Breast epithelium (tissue), 4 donors: ENCODE measurements at regions of chr6 and their contacts with region 1.

Region 1: DNA sequence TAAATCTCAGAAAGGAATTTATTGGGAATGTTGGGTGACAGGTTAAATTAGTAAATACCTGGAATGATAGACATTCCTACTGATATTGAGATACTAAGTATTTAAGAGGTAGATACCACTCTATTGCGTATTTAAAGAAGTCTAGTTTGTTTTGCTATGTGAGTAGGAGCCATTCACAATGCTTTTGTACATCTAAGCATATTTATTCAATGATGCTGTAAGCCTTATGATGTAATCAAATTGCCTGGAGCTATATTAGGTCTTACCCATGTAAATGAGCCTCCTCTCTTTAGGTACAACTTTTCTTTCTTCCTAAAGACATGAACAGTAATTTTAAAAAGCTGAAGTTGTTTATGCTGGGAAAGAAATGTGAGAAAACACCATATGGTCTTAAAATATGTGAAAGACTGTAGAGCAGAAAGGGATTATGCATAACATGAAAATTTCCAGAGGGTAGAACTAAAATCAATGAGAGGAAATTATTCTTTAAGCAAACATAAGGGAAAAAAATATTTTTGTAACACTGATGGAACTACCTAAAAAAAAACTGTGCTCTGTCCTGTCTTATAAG is 526.7 kb downstream of the EPHA7 start:
- DNase-seq: no peak
- H3K4me3 ChIP-seq: no peak overlapping the region
- H3K27ac ChIP-seq: no peak overlapping the region
- H3K4me1 ChIP-seq: no peaks in the 10 kb centered on the region
- H3K27me3 ChIP-seq: no peaks in the 10 kb centered on the region
- CTCF ChIP-seq: no peak
- POLR2A ChIP-seq: no peak

Region 2: DNA sequence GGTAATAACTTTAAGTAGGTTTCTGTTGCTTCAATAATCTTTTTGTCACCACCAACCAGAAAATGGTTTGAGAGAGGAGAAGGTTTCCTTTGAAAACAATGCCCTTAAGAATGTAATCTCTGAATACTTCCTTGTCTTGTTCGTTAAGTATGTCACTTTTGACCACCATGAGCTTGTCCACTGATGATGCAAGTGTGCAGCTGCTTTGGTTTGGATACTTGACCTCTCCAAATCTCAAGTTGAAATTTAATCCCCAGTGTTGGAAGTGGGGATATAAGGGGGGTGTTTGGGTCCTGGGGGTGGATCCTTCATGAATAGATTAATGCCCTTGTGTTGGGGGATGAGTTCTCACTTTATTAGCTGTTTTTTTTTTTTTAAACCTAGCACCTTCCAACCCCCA is 458.8 kb before region 1 on chr6:
- intact Hi-C with region 1: loop called (anchors 5 kb)
- DNase-seq: no peak
- H3K4me3 ChIP-seq: no peak overlapping the region
- H3K27ac ChIP-seq: no peak overlapping the region
- H3K4me1 ChIP-seq: no peaks in the 10 kb centered on the region
- H3K27me3 ChIP-seq: no peaks in the 10 kb centered on the region
- CTCF ChIP-seq: no peak
- POLR2A ChIP-seq: no peak